ENCODE measurements at regions of chr15 and their contacts with region 1.

Region 1: DNA sequence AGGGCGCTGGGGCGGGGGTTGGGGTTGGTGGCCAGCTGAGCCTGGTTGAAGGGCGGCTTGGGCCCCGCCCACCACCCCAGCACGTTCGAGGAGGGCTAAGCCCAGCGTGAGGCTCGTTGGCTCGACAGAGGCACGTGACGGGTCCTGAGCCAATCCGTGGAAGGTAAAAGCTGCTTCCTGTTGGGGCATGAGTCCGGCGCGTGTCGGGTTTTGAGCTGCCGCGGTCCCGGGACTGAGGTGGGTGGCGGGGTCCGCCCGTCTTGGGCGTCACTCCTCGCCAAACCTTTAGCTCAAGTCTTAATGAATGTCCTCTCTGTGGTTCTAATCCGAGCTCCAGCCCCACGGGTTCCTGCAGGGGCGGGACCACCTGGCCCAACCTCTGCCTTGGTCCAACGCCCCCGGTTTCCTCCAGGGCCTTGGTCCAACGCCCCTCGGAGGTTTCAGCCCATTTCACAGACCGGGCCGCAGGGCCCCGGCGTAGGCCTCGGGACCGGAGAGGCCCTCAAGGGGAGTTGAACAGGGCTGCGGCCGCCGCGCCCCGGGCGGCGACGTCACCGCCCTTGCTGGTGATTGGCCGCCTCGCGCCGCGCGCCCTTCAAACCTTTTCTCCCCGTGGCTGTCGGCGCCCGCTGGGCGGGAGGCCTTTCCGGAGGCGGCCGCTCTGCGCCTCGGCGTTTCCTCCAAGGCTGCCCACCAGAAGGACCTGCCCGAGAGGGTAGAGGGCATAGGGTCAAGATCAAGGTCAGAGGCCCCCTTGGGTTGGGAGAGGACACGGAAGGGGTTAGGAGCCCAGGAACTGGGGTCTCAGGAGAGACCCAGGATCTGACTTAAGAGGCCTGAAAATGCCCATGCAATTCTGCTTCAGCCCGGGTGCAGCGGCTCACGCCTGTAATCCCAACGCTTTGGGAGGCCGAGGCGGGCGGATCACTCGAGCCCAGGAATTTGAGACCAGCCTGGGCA is at the start of gene RCCD1:
- DNase-seq: peak; percentile 98
- ATAC-seq: peak; percentile 94
- total RNA-seq, gene RCCD1: 9.3 TPM

Region 2: DNA sequence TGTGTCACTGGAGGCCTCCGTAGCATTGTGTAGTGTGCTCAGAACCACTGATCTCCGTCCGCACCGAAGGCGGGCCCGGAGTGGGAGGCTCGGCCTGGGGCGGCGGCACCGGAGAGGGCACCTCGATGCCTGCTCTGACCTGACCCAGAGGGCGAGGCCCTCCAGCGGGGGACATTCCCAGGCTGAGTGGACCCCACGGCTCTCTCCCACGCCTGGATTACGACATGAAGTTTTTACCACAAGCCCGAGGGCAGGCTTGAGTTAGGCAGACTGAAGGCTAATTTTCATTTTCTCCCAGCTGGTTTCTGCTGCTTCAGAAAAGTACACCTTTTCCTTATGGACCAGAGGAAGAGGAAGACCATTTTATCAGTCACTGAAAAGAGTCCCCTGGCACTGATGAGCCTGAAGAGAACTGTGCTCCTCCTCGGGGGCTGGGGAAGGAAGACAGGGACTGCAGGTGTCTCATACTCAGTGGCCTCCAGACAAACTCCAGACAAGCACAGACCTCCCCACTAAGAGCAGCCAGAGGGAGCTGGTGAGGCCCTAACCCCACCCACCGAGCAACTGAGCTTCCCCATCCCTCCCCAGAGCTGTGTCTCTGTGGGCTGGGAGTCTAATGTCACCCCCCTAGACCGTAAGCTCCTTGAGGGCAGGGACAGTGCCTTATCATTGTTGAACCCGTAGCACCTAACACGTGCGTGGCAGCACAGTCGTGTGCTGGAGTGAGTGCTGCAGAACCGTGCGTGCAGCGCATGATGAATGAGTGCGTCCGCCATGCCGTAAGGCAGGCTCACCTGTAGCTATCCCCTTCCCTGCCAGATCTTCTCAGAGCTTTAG is 312.3 kb before region 1 on chr15:
- intact Hi-C with region 1: no loop called
- DNase-seq: no peak
- ATAC-seq: no peak

Region 3: GRCh38 chr15:90660195-90660998 is 294.6 kb before region 1 on chr15:
- intact Hi-C with region 1: no loop called
- DNase-seq: peak; percentile 84
- ATAC-seq: peak; percentile 79

Region 4: DNA sequence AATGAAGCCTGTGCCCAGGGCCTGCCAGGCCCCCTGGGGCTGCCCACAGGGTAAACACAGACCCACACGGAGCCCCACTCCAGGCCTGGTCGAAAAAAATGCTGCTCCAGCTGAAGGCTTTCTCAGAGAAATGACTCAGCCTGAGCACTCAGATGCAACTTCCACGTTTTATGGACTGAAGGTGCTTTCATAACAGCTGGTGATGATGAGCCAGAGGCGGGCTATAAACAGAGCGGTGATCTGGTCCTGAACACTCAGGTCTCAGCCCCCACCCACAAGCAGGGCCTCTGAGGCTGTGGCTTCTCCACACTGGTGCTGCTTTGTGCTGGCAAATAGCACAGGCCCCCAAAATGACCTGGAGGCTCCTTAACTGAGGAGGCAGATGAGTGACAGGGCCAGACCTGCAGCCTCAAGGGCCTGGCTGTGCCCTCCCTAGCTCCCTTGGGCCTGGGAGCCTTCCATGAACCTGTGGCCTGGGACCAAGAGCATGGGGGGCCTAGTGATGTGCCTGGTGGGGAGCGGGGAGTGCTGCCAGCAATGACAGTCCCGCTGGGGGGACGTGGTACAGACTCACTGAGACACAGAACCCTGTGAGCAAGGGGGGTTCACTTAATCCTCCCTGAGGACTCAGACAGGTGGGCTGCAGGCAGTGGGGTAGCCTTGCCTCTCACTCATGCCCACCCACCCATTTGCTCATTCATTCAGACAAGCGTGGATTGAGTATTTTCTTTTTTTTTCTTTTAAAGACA is 109.6 kb before region 1 on chr15:
- intact Hi-C with region 1: no loop called
- DNase-seq: no peak
- ATAC-seq: peak; percentile 60

Region 5: GRCh38 chr15:91032919-91033803 is 78.2 kb after region 1 on chr15:
- intact Hi-C with region 1: loop called (anchors 5 kb)
- DNase-seq: peak; percentile 67
- ATAC-seq: no peak

Region 6: GRCh38 chr15:91049378-91050127 is 94.6 kb after region 1 on chr15:
- intact Hi-C with region 1: loop called (anchors 5 kb)
- DNase-seq: no peak
- ATAC-seq: peak; percentile 93

Region 7: GRCh38 chr15:91271565-91272153 is 316.7 kb after region 1 on chr15:
- intact Hi-C with region 1: loop called (anchors 5 kb)
- DNase-seq: no peak
- ATAC-seq: peak; percentile 85

Measured in Right ventricle myocardium superior (tissue), 1 donor.